ENCODE measurements at regions of chr12 and their contacts with region 1.

Region 1: DNA sequence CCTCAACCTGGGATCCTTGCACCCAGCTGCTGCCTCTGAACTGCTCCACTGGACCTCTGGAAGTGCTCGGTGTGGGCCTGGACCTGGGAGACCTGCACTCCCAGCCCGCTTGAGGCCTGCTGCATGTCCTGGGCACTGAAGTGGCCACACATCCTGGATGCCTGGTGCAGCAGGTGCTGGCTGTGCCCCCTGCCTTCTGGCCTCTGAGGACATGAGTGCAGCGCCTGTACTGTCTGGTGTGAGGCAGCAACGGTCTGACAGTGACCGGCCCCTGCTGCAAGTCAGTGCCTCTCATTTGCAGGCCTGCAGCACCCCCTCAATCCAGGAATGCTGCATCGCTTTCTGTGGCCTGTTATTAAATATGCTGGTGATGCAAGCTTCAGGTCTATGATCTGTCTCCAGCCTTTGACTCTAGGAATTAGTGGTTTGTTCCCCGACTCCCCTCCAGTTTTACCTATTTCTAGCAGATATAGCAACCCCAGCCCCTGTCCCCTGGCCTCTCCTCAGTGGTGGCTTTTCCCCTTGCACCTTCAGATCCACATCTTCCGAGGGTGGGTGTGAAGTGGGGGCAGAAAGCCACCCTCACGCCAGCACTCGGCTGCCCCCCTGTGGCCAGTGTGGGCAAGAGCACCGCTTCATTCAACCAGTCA is 3.6 kb downstream of the SMIM41 start:
- DNase-seq: peak; percentile 44 to 80 (median 64)
- ATAC-seq: peak in 3 of 4 donors; percentile 44 to 58 (median 47)
- H3K4me3 ChIP-seq: no peak overlapping the region
- H3K27ac ChIP-seq: peak overlapping the region; percentile 37 to 89 (median 71)
- H3K4me1 ChIP-seq: peaks cover 6 to 37% (median 27%) of the 10 kb centered on the region in 12 donors
- H3K27me3 ChIP-seq: peaks cover 0 to 6% (median 0%) of the 10 kb centered on the region in 9 donors
- CTCF ChIP-seq: peak; percentile 93 to 99 (median 98)
- POLR2A ChIP-seq: no peak

Region 2: GRCh38 chr12:51891843-51892242 is 191.3 kb before region 1 on chr12:
- intact Hi-C with region 1: loop called in 1 of 10 experiments (anchors 10 kb)
- DNase-seq: no peak
- ATAC-seq: no peak
- H3K4me3 ChIP-seq: no peak overlapping the region
- H3K27ac ChIP-seq: no peak overlapping the region
- H3K4me1 ChIP-seq: peaks cover 3 to 29% (median 18%) of the 10 kb centered on the region in 12 donors
- H3K27me3 ChIP-seq: no peaks in the 10 kb centered on the region
- CTCF ChIP-seq: peak; percentile 23 to 55 (median 39)
- POLR2A ChIP-seq: no peak

Region 3: GRCh38 chr12:51905471-51906429 is 177.4 kb before region 1 on chr12:
- intact Hi-C with region 1: loop called in 1 of 10 experiments (anchors 10 kb)
- DNase-seq: peak; percentile 81 to 94 (median 85)
- ATAC-seq: peak; percentile 69 to 85 (median 82)
- H3K4me3 ChIP-seq: peak overlapping the region in 10 of 12 donors; percentile 61 to 90 (median 71)
- H3K27ac ChIP-seq: peak overlapping the region; percentile 87 to 98 (median 94)
- H3K4me1 ChIP-seq: peaks cover 3 to 63% (median 52%) of the 10 kb centered on the region in 12 donors
- H3K27me3 ChIP-seq: peaks cover 0 to 22% (median 5%) of the 10 kb centered on the region in 9 donors
- CTCF ChIP-seq: no peak
- POLR2A ChIP-seq: peak in 1 of 2 donors; percentile 51

Region 4: DNA sequence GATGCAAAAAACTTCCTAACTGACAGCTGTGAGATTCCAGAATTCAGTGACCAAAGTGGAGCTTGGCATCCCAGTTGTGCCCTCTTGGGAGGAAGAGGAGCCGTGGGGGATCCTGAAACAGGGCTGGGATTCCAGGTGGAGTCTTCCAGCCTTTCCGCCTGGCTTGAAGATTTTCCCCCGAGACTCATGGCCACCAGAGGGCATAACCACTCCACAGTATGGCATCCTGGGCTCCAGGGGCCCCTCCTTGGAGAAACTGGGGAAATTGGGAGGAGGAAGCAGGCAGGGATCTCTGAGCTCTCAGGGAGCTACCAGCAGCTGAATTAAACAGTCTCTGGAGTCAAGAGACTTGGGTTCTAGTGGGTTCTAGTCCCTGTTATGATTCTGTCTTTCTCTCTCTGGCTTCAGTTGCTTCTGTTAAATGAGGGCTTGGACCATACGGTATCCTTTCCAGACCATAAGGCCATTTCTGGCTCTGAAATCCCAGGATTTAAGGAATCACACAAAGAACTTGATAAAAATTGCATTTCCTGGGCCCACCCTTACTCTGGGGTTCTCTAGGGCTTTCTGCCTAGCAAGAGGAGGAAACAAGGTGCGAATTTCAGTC is 79.0 kb before region 1 on chr12:
- intact Hi-C with region 1: loop called in 6 of 10 experiments (anchors 5 kb)
- DNase-seq: peak in 4 of 5 donors; percentile 59 to 64 (median 60)
- ATAC-seq: peak; percentile 16 to 40 (median 30)
- H3K4me3 ChIP-seq: no peak overlapping the region
- H3K27ac ChIP-seq: no peak overlapping the region
- H3K4me1 ChIP-seq: peaks cover 0 to 47% (median 17%) of the 10 kb centered on the region in 12 donors
- H3K27me3 ChIP-seq: peaks cover 0 to 20% (median 4%) of the 10 kb centered on the region in 9 donors
- CTCF ChIP-seq: peak; percentile 48 to 77 (median 70)
- POLR2A ChIP-seq: no peak